ENCODE measurements at regions of chr2 and their contacts with region 1.

Region 1: DNA sequence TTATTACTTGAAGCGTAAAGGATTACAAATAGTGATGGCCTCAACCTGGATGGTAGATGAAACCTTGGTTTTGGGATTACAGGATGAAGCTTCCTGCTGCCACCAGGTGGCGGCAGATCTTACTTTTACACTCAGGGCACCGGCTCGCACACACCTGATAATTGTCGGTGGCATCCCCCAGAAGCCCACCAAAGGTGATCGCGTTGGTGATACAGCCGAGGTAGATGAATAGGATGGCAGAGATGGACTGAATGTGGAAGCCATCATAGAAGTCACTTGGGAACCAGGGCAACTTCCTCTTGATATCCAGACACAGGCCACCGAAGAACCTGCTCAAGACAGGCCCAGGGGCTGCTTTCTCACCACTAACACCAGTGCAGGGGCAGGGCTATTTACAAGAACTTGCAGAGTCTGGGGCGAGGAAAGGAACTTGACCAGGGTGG is 51.8 kb downstream of the MTHFD2 start:
- DNase-seq: peak; percentile 40 to 78 (median 67)
- ATAC-seq: peak; percentile 50 to 64
- H3K4me3 ChIP-seq: no peak overlapping the region
- H3K27ac ChIP-seq: no peak overlapping the region
- H3K4me1 ChIP-seq: peaks cover 1% of the 10 kb centered on the region
- H3K27me3 ChIP-seq: no peaks in the 10 kb centered on the region

Region 2: GRCh38 chr2:74304332-74305148 is 54.3 kb after region 1 on chr2:
- intact Hi-C with region 1: no loop called
- DNase-seq: no peak
- ATAC-seq: no peak
- H3K4me3 ChIP-seq: no peak overlapping the region
- H3K27ac ChIP-seq: no peak overlapping the region
- H3K4me1 ChIP-seq: no peaks in the 10 kb centered on the region
- H3K27me3 ChIP-seq: no peaks in the 10 kb centered on the region

Region 3: DNA sequence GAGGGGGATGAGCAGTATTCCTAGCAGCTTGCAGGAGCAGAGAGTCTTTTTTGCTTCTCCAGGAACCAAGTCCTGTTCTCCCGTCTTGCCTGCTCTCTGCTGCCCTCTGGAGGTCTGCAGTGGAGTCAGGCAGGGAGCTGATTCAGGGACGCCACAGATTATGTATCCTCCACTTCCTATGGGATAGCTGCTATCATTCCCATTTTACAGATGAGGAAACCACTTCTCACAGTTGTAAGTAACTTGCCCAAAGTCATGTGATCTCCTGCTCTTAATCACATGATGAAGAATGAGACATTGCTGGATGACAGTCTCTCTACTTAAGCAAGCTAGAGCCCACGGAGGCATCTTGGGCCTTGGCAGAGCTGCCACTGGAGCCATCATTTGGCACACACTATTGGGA is 84.7 kb after region 1 on chr2:
- intact Hi-C with region 1: loop called in 3 of 4 experiments (anchors 5 to 10 kb)
- DNase-seq: peak; percentile 62 to 90 (median 88)
- ATAC-seq: peak; percentile 74 to 90
- H3K4me3 ChIP-seq: no peak overlapping the region
- H3K27ac ChIP-seq: no peak overlapping the region
- H3K4me1 ChIP-seq: no peaks in the 10 kb centered on the region
- H3K27me3 ChIP-seq: no peaks in the 10 kb centered on the region

Region 4: GRCh38 chr2:74756356-74756890 is 506.2 kb after region 1 on chr2:
- intact Hi-C with region 1: no loop called
- DNase-seq: no peak
- ATAC-seq: no peak
- H3K4me3 ChIP-seq: no peak overlapping the region
- H3K27ac ChIP-seq: no peak overlapping the region
- H3K4me1 ChIP-seq: no peaks in the 10 kb centered on the region
- H3K27me3 ChIP-seq: no peaks in the 10 kb centered on the region

Measured in right cardiac atrium (tissue), 5 donors.